Panc1 (cell line): ENCODE measurements at regions of chr16 and their contacts with region 1.

Region 1: GRCh38 chr16:2905431-2906387 is 6.0 kb upstream of the FLYWCH1 start:
- DNase-seq: peak; percentile 98
- ATAC-seq: peak; percentile 88
- H3K4me3 ChIP-seq: peak overlapping the region; percentile 64 to 92
- H3K27ac ChIP-seq: peak overlapping the region; percentile 76
- H3K4me1 ChIP-seq: peaks cover 6% of the 10 kb centered on the region
- H3K27me3 ChIP-seq: no peaks in the 10 kb centered on the region
- CTCF ChIP-seq: no peak

Region 2: GRCh38 chr16:2770057-2770951 is 135.4 kb before region 1 on chr16:
- CTCF ChIA-PET with region 1: no interaction called
- POLR2A ChIA-PET with region 1: no interaction called
- in situ Hi-C with region 1: no loop called
- intact Hi-C with region 1: no loop called
- DNase-seq: no peak
- ATAC-seq: peak; percentile 54
- H3K4me3 ChIP-seq: no peak overlapping the region
- H3K27ac ChIP-seq: peak overlapping the region; percentile 98
- H3K4me1 ChIP-seq: peaks cover 84% of the 10 kb centered on the region
- H3K27me3 ChIP-seq: no peaks in the 10 kb centered on the region
- CTCF ChIP-seq: peak; percentile 83

Region 3: GRCh38 chr16:2856061-2856827 is 49.5 kb before region 1 on chr16:
- CTCF ChIA-PET with region 1: interaction called, 14 read pairs
- POLR2A ChIA-PET with region 1: no interaction called
- in situ Hi-C with region 1: no loop called
- intact Hi-C with region 1: no loop called
- DNase-seq: no peak
- ATAC-seq: peak; percentile 76
- H3K4me3 ChIP-seq: peak overlapping the region; percentile 37 to 65
- H3K27ac ChIP-seq: peak overlapping the region; percentile 79
- H3K4me1 ChIP-seq: peaks cover 22% of the 10 kb centered on the region
- H3K27me3 ChIP-seq: no peaks in the 10 kb centered on the region
- CTCF ChIP-seq: no peak